CD4-positive, alpha-beta memory T cell (primary cell): ENCODE measurements at regions of chr14 and their contacts with region 1.

Region 1: GRCh38 chr14:74762917-74763802 is at the start of gene YLPM1:
- DNase-seq: peak; percentile 95 to 97 (median 96)
- H3K4me3 ChIP-seq: peak within 1 kb of the TSS; percentile 77
- H3K4me3 Mint-ChIP-seq: peak within 1 kb of the TSS; percentile 87 to 99 (median 91)
- H3K27ac ChIP-seq: peak within 1 kb of the TSS; percentile 93
- H3K27ac Mint-ChIP-seq: peak within 1 kb of the TSS; percentile 92 to 98 (median 95)
- H3K4me1 ChIP-seq: peaks cover 50% of the 10 kb centered on the region
- H3K4me1 Mint-ChIP-seq: peaks cover 33 to 54% (median 44%) of the 10 kb centered on the region in 4 donors
- H3K27me3 ChIP-seq: no peaks in the 10 kb centered on the region
- H3K27me3 Mint-ChIP-seq: no peaks in the 10 kb centered on the region
- total RNA-seq, gene YLPM1: 83.1 to 90.3 TPM

Region 2: DNA sequence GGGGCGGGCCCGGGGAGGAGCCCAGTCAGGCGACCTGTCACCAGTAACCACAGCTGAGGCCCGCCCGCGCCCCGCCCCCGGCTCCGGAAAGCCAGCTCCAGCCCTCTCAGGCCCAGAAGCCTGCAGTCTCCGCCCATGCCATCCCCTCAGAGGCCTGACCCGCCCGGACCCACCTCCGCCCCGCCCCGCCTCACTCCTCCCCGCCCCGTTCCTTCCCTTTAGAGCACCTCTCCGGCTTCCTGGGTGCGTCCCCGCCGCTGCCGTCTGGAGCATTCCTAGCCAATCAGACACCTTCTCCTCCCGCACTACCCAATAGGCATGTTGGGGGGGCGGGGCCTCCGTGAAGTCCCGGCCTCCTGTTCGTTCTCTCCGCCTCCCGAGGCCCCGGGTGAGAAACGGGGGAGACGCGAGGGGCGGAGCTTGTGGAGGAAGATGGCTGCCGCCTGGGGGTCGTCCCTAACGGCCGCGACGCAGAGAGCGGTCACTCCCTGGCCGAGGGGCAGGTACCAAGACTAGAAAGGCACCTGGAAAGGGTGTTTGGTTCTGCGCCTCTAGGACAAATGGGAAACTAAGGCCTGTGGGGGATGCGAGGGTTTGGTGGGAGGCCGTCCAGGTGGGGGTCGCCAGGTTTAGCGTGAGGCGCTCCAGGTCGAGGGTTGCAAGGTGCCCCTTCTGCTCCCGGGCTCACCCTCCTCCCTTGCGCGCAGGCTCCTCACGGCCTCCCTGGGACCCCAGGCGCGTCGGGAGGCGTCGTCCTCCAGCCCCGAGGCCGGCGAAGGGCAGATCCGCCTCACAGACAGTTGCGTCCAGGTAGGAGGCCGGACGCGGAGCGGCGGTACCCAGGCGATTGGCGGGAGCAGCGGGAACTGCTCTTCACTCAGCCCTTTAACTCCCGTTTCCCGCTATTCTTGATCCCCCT is 269.6 kb before region 1 on chr14 and contains the start of gene ISCA2:
- CTCF ChIA-PET with region 1: no interaction called
- POLR2A ChIA-PET with region 1: no interaction called
- intact Hi-C with region 1: loop called (anchors 1 kb)
- DNase-seq: peak; percentile 97 to 100 (median 99)
- H3K4me3 ChIP-seq: peak within 1 kb of the TSS; percentile 79 to 89
- H3K4me3 Mint-ChIP-seq: no peak within 1 kb of the TSS
- H3K27ac ChIP-seq: peak within 1 kb of the TSS; percentile 86
- H3K27ac Mint-ChIP-seq: peak within 1 kb of the TSS in 6 of 7 donors; percentile 91 to 97 (median 94)
- H3K4me1 ChIP-seq: peaks cover 39% of the 10 kb centered on the region
- H3K4me1 Mint-ChIP-seq: peaks cover 24 to 31% (median 27%) of the 10 kb centered on the region in 4 donors
- H3K27me3 ChIP-seq: no peaks in the 10 kb centered on the region
- H3K27me3 Mint-ChIP-seq: no peaks in the 10 kb centered on the region
- total RNA-seq, gene ISCA2: 31.3 to 33.1 TPM

Region 3: DNA sequence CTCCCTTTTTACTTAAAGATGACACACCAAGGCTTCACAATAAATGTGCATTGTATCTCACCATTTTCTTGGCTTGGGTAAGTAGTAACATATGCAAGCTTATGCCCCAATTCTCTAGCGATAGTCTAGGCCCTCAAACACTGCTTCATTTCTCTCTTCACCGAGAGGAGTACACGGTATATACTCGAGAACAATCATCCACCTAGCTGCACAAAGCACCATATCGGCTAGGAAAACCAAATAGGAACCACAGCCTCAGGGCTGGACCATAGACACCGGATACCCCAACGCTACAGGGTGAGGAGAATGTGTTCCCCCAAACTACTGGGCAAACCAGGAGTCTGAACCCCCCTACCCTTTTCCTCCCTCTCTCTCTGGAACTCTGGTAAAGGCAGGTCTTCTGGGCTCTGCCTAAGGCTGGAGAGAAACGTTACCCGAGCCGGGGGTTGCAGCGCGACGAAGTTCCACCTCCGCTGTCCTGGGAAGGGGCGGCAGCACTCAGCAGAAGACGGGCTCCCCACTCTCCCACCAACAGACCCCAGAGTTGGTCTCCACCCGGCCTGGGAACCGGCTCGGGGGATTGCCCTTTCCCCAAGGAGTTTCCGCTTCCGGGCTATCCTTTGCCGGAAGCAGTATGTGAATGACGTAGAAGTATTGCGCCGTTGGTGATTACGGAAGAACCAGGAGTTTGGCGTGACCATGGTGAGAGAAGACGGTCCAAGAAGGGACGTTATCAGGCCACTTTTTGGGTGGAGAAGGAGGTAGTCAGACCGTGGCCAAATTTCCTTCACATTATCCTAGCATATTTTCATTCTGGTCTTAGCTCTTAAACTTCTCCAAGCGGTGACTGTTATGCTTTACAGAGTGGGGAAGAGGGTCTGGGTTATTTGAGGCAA is 50.4 kb before region 1 on chr14 and contains the starts of genes AREL1 and FCF1:
- CTCF ChIA-PET with region 1: no interaction called
- POLR2A ChIA-PET with region 1: interaction called, 9 read pairs
- intact Hi-C with region 1: loop called (anchors 1 kb)
- DNase-seq: peak; percentile 83 to 90 (median 85)
- H3K4me3 ChIP-seq: peak within 1 kb of the TSS; percentile 80 to 83
- H3K4me3 Mint-ChIP-seq: peak within 1 kb of the TSS; percentile 90 to 100 (median 98)
- H3K27ac ChIP-seq: peak within 1 kb of the TSS; percentile 91
- H3K27ac Mint-ChIP-seq: peak within 1 kb of the TSS; percentile 91 to 100 (median 99)
- H3K4me1 ChIP-seq: peaks cover 40% of the 10 kb centered on the region
- H3K4me1 Mint-ChIP-seq: peaks cover 38 to 60% (median 47%) of the 10 kb centered on the region in 4 donors
- H3K27me3 ChIP-seq: no peaks in the 10 kb centered on the region
- H3K27me3 Mint-ChIP-seq: no peaks in the 10 kb centered on the region
- total RNA-seq, gene AREL1: 44.4 to 46.1 TPM
- total RNA-seq, gene FCF1: 57.5 to 57.9 TPM

Region 4: GRCh38 chr14:74793506-74794168 is 30.5 kb after region 1 on chr14:
- CTCF ChIA-PET with region 1: interaction called, 8 read pairs
- POLR2A ChIA-PET with region 1: interaction called, 13 read pairs
- intact Hi-C with region 1: loop called (anchors 2 kb)
- DNase-seq: peak in 2 of 5 donors; percentile 6 to 8
- H3K4me3 ChIP-seq: no peak overlapping the region
- H3K4me3 Mint-ChIP-seq: peak overlapping the region; percentile 46 to 89 (median 78)
- H3K27ac ChIP-seq: no peak overlapping the region
- H3K27ac Mint-ChIP-seq: peak overlapping the region; percentile 21 to 93 (median 86)
- H3K4me1 ChIP-seq: peaks cover 29% of the 10 kb centered on the region
- H3K4me1 Mint-ChIP-seq: peaks cover 45 to 56% (median 49%) of the 10 kb centered on the region in 4 donors
- H3K27me3 ChIP-seq: no peaks in the 10 kb centered on the region
- H3K27me3 Mint-ChIP-seq: no peaks in the 10 kb centered on the region

Region 5: GRCh38 chr14:74881431-74882361 is 118.5 kb after region 1 on chr14 and contains the start of gene DLST:
- CTCF ChIA-PET with region 1: no interaction called
- POLR2A ChIA-PET with region 1: interaction called, 6 read pairs
- intact Hi-C with region 1: loop called (anchors 5 kb)
- DNase-seq: peak; percentile 82 to 87 (median 83)
- H3K4me3 ChIP-seq: peak within 1 kb of the TSS; percentile 44 to 98
- H3K4me3 Mint-ChIP-seq: peak within 1 kb of the TSS; percentile 96 to 100 (median 99)
- H3K27ac ChIP-seq: peak within 1 kb of the TSS; percentile 87
- H3K27ac Mint-ChIP-seq: peak within 1 kb of the TSS; percentile 93 to 100 (median 100)
- H3K4me1 ChIP-seq: peaks cover 53% of the 10 kb centered on the region
- H3K4me1 Mint-ChIP-seq: peaks cover 48 to 75% (median 62%) of the 10 kb centered on the region in 4 donors
- H3K27me3 ChIP-seq: no peaks in the 10 kb centered on the region
- H3K27me3 Mint-ChIP-seq: no peaks in the 10 kb centered on the region
- total RNA-seq, gene DLST: 101 to 104 TPM